WTC11 (cell line): ENCODE measurements at regions of chr17 and their contacts with region 1.

Region 1: DNA sequence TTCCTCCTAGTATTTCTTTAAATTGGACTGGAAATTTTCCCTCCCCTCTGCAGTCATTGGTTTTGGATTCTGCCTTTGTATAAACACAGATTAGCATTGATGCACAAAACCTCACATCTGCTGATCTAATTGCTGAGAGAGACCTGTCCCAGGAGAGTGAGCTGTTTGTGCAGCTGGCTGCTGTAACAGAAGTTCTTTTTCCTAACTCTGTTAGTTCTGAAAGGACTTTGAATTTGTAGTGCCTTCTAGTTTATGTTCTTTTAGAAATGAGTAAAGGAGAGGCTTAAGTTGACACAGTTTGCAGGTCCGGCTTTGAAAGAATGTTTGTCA is 45.2 kb upstream of the KPNB1 start:
- DNase-seq: no peak
- ATAC-seq: no peak
- H3K4me3 Mint-ChIP-seq: no peak overlapping the region
- H3K27ac Mint-ChIP-seq: peak overlapping the region; percentile 12; the same call in 1 of the 2 replicates
- H3K4me1 Mint-ChIP-seq: no peaks in the 10 kb centered on the region
- H3K27me3 Mint-ChIP-seq: no peaks in the 10 kb centered on the region
- CTCF ChIP-seq: no peak

Region 2: GRCh38 chr17:46205975-46206374 is 1398.6 kb before region 1 on chr17:
- CTCF ChIA-PET with region 1: no interaction called
- POLR2A ChIA-PET with region 1: interaction called, 11 read pairs
- DNase-seq: no peak
- ATAC-seq: no peak
- H3K4me3 Mint-ChIP-seq: no peak overlapping the region
- H3K27ac Mint-ChIP-seq: no peak overlapping the region
- H3K4me1 Mint-ChIP-seq: no peaks in the 10 kb centered on the region
- H3K27me3 Mint-ChIP-seq: no peaks in the 10 kb centered on the region
- CTCF ChIP-seq: no peak

Region 3: DNA sequence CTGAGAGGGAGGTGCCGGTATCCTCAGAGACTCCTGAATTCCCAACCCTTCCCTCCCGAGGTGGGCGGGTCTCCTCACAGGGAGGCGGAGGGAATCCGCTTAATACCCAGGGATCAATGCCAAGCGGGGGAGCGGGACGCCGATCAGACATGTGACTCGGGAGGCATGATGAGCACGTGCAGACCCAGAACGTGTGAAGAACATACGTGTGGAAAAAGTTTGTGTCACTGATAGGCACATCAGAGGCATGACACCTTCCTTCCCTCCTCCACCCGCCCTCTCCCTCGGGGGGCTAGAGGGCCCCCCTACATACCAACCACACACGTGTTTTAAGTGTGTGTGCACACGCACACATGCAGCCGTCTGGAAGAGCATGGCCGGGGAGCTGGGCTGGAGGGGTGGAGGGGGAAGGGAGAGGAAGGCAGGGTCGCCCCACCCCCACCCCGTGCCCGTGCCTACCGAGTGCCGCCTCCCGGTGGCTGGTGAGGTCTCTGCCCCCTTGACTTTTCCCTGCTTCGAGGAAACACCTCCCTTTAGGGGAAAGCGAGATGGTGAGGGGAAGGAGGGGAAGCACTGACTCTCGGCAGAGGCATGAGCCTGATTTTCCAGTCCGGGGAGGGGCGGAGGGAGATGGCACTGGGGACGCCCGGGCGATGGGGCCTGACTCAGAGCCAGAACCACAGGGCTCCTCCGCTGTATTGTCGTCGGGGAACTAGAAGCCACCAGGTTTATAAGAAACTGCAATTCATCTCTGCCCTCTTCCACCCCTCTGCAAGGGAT is 116.4 kb after region 1 on chr17:
- CTCF ChIA-PET with region 1: no interaction called
- POLR2A ChIA-PET with region 1: no interaction called
- DNase-seq: peak; percentile 59
- ATAC-seq: peak; percentile 72
- H3K4me3 Mint-ChIP-seq: peak overlapping the region; percentile 53
- H3K27ac Mint-ChIP-seq: no peak overlapping the region
- H3K4me1 Mint-ChIP-seq: peaks cover 14% of the 10 kb centered on the region
- H3K27me3 Mint-ChIP-seq: peaks cover 61% of the 10 kb centered on the region
- CTCF ChIP-seq: no peak